AG04449 (cell line): ENCODE measurements at regions of chr10 and their contacts with region 1.

Region 1: GRCh38 chr10:16863766-16864165 is 46.5 kb upstream of the RSU1 start:
- DNase-seq: no peak
- H3K4me3 ChIP-seq: no peak overlapping the region
- CTCF ChIP-seq: no peak

Region 2: DNA sequence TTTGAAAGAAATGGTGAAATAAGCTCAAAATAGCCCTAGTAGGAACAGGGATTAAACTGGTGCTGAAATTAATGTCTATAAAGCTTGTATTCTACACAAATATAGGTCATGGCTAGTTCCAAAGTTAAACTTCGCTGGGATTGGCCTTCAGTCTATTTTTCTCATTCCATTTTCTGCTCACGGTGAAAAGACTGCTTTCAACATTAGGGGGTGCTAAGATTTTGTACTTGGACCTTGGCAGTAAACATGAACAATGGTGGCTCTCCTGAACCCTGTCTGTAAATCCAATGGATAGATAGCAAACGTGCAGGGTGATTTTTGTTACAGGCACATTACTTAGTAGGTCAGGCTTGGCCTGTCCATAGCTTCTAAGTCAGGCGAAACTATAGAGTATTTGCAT is 10.6 kb before region 1 on chr10:
- CTCF ChIA-PET with region 1: interaction called, 14 read pairs
- POLR2A ChIA-PET with region 1: no interaction called
- DNase-seq: no peak
- H3K4me3 ChIP-seq: no peak overlapping the region
- CTCF ChIP-seq: peak; percentile 53